ENCODE measurements at regions of chr5 and their contacts with region 1.

Region 1: DNA sequence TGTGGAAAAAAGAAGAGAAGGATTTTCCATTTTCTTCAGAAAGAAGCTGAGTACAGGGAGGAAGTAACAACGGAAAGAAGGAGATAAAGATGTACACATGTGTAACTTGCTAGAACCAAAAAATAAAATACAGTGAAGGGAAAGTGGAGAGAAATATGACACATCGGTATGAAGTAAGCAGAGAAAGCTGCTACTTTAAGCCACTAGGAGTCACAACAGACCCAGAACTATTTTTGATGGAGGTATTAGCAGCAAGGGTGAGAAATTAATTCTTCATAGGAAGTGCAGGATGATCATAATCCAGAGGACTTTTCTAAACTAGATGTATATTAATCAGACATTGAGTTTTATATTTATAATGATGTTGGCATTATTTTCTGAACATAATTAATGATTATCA is 88.5 kb downstream of the FAM174A start:
- DNase-seq: no peak
- H3K4me3 ChIP-seq: no peak overlapping the region
- H3K27ac ChIP-seq: no peak overlapping the region
- H3K4me1 ChIP-seq: no peaks in the 10 kb centered on the region
- H3K27me3 ChIP-seq: no peaks in the 10 kb centered on the region
- CTCF ChIP-seq: peak; percentile 51

Region 2: DNA sequence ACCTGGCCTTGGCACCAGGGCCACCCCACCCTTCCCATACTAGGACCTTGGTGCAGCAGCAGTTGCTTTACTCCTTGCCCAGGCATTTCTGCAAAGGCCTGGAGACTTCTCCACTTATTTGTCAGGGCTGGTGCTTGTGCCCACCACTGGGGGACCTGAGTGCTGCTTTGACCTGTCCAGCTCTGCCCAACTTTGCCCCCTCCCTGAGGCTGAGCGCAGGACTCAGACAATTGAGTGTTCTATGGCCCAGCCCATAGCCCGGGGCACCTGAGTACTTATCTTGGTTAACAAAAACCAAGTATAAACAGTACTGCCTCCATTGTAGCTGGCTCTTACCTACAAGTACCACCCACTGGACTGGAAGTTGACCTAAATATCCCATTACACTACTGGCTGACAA is 1288.8 kb before region 1 on chr5:
- CTCF ChIA-PET with region 1: no interaction called
- POLR2A ChIA-PET with region 1: no interaction called
- intact Hi-C with region 1: no loop called
- DNase-seq: no peak
- H3K4me3 ChIP-seq: no peak overlapping the region
- H3K27ac ChIP-seq: no peak overlapping the region
- H3K4me1 ChIP-seq: no peaks in the 10 kb centered on the region
- H3K27me3 ChIP-seq: no peaks in the 10 kb centered on the region
- CTCF ChIP-seq: no peak

Region 3: GRCh38 chr5:100306000-100306399 is 317.7 kb before region 1 on chr5:
- CTCF ChIA-PET with region 1: no interaction called
- POLR2A ChIA-PET with region 1: no interaction called
- intact Hi-C with region 1: no loop called
- DNase-seq: no peak
- H3K4me3 ChIP-seq: no peak overlapping the region
- H3K27ac ChIP-seq: no peak overlapping the region
- H3K4me1 ChIP-seq: no peaks in the 10 kb centered on the region
- H3K27me3 ChIP-seq: no peaks in the 10 kb centered on the region
- CTCF ChIP-seq: no peak

Region 4: DNA sequence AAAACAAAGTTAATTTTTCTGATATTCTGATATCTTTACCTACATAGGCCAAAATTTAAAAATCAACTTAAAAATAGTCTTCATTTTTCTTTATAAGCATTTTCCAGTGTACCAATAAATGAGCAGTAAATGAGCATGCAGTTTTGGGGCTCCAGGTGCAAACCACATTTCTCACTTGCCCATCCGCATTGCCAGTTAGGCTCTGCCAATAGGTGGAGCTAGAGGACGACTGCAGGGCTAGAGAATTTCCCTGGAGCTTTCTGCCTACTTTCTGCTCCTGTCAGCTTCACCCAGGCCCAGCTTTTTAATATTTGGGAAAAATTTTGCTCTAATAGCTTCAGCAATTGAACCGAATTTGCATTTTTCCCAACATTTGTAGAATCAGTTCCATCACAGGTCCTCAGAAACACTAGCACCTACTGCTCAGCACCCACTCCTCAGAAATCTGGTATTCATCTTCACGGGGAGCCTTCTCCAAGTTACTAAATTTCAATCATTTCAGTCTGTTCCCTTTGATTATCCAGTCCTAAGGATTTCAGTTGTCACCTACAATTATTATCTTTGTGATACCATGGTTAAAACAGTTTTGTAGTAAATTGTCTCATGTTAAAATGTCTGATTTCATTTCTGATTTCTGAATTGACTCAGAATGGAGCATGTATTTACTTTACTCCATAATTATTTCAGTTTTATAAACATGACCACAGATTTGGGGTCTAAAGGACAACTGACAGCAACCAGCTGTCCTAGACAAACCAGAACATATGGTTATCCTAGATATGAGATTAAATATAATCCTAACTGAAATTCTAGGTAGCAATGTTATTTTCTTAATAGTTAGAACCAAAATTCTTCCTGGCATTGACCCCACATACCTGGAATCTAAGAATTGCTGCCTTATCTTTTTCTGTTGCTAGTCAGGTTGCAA is 193.2 kb before region 1 on chr5:
- CTCF ChIA-PET with region 1: no interaction called
- POLR2A ChIA-PET with region 1: no interaction called
- intact Hi-C with region 1: loop called (anchors 2 kb)
- DNase-seq: peak in 1 of 2 experiments; percentile 41
- H3K4me3 ChIP-seq: no peak overlapping the region
- H3K27ac ChIP-seq: no peak overlapping the region
- H3K4me1 ChIP-seq: no peaks in the 10 kb centered on the region
- H3K27me3 ChIP-seq: no peaks in the 10 kb centered on the region
- CTCF ChIP-seq: peak; percentile 79